ENCODE measurements at regions of chr6 and their contacts with region 1.

Region 1: DNA sequence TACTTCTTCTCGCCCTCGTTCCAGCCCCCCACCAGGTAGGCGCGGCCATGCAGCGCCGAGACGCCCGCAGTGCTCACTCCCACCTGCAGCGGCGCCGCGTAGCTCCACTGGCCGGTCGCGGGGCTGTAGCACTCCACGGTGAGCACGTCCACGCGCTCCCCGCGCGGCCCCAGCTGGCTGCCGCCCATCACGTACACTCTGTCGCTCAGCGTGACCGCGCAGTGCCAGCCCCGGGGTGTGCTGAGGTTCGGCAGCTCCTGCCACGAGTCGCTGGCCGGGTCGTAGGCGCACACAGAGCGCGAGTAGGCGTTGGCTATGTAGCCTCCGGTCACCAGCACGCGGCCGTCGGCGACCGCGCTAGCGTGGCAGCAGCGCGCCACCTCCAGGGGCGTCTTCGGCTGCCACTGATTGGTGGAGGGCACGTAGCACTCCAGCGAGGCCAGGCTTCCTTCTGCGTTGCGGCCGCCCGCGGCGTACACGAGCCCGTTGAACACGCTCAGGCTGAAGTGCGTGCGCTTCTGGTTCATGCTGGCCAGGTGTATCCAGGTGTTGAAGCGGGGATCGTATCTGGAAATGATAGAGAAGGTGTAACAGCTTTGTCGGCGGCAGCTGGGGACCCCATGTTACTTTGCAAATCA is 13.7 kb downstream of the KLHL31 start:
- DNase-seq: peak; percentile 62 to 82 (median 74)
- ATAC-seq: peak; percentile 94
- H3K4me3 ChIP-seq: peak overlapping the region; percentile 91
- H3K4me3 Mint-ChIP-seq: peak overlapping the region; percentile 90 to 99 (median 94)
- H3K27ac ChIP-seq: peak overlapping the region; percentile 45
- H3K27ac Mint-ChIP-seq: peak overlapping the region; percentile 65 to 93 (median 84)
- H3K4me1 ChIP-seq: peaks cover 9 to 15% of the 10 kb centered on the region in 2 donors
- H3K4me1 Mint-ChIP-seq: peaks cover 14 to 34% (median 21%) of the 10 kb centered on the region in 7 donors
- H3K27me3 ChIP-seq: no peaks in the 10 kb centered on the region
- H3K27me3 Mint-ChIP-seq: peaks cover 0 to 35% (median 0%) of the 10 kb centered on the region in 5 donors

Region 2: DNA sequence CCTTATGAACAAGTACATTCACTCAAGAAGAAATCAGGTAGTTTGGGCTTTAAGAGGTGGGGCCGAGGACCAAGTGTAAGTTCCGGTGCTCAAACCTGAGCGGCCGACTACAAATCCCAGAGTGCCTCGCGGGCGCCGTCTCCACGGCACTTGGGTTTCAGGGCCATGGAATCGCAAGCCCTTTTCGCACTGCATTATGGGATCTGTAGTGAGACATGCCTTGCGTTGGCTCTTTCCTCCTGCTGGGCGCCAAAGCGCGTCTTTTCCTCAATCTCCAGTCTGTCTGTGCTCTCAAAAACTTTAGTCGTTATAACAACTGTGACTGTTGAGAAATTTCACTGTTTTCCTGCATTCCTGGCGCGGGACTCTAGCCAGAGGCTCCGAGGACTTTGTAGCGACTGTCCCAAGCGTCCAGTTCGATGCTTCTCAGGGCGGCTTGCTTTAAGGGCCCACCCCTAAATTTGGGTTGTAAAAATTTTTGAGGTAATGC is 587.1 kb before region 1 on chr6:
- CTCF ChIA-PET with region 1: no interaction called
- POLR2A ChIA-PET with region 1: no interaction called
- intact Hi-C with region 1: loop called in 1 of 2 experiments (anchors 1 kb)
- DNase-seq: peak; percentile 81 to 98 (median 94)
- ATAC-seq: peak; percentile 91
- H3K4me3 ChIP-seq: peak overlapping the region; percentile 95
- H3K4me3 Mint-ChIP-seq: peak overlapping the region; percentile 86 to 100 (median 99)
- H3K27ac ChIP-seq: peak overlapping the region; percentile 78
- H3K27ac Mint-ChIP-seq: peak overlapping the region; percentile 90 to 99 (median 97)
- H3K4me1 ChIP-seq: peaks cover 22% of the 10 kb centered on the region in 2 donors
- H3K4me1 Mint-ChIP-seq: peaks cover 36 to 68% (median 56%) of the 10 kb centered on the region in 7 donors
- H3K27me3 ChIP-seq: no peaks in the 10 kb centered on the region
- H3K27me3 Mint-ChIP-seq: no peaks in the 10 kb centered on the region

Region 3: DNA sequence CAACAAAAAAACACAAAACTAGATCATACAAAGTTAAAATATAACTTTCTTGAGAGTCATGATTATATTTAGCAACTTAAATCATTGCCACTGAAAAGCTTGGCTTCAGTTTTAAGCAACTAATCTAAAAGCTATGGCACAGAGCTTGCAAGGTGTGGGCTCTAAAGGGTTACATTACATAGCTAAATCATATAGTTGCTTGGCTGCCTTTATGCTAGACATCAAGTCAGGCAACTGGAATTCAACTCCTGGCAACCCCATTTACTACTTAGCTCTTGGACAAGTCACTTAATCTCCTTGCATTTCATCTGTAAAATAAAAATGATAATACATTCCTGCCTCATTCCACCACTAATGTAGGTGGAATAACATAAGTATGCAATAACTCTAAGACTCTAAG is 462.3 kb before region 1 on chr6:
- CTCF ChIA-PET with region 1: no interaction called
- POLR2A ChIA-PET with region 1: no interaction called
- intact Hi-C with region 1: loop called (anchors 5 kb)
- DNase-seq: no peak
- ATAC-seq: no peak
- H3K4me3 ChIP-seq: no peak overlapping the region
- H3K4me3 Mint-ChIP-seq: no peak overlapping the region
- H3K27ac ChIP-seq: no peak overlapping the region
- H3K27ac Mint-ChIP-seq: no peak overlapping the region
- H3K4me1 ChIP-seq: peaks cover 12 to 26% of the 10 kb centered on the region in 2 donors
- H3K4me1 Mint-ChIP-seq: peaks cover 8 to 39% (median 29%) of the 10 kb centered on the region in 7 donors
- H3K27me3 ChIP-seq: no peaks in the 10 kb centered on the region
- H3K27me3 Mint-ChIP-seq: peaks cover 0 to 2% (median 0%) of the 10 kb centered on the region in 5 donors

Region 4: DNA sequence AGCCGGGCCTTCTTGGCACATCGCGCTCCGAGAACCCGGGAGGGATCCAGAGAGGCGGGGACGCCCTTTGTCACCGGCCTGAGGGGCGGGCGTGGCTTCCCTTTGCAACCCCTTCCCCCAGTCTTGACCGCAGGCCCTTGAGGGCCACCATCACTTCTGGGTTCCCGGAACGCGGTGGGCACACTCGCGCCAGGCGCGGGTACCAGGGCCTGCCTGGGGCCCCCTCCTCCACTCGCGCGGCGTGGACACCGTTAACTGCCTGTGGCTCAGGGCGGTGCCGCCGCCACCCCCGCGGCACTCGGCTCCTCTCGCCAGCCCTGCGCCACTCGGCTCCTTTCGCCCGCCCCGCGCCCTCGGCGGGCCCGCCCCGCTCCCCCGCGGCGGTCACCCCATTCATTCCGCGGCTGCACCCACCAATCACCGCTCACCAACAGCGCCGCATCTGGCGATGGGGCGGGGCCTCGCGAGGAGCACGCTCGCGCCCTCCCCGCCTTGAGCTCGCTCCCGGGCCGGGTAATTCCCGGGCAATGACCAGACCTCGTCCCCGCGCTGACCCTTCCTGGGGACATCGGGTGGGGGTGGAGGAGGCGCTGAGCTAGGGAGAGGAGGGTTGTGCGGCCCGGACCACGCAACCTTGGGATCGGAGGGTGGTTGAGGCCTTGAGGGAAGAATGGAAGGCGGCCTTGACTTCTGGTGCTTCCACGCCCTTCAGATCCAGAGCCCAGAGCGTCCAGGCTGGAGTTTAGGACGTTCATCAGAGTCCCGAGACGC is 292.6 kb before region 1 on chr6:
- CTCF ChIA-PET with region 1: no interaction called
- POLR2A ChIA-PET with region 1: interaction called, 3 read pairs
- intact Hi-C with region 1: loop called in 1 of 2 experiments (anchors 5 kb)
- DNase-seq: peak; percentile 79 to 96 (median 89)
- ATAC-seq: peak; percentile 91
- H3K4me3 ChIP-seq: peak overlapping the region; percentile 76
- H3K4me3 Mint-ChIP-seq: peak overlapping the region; percentile 78 to 94 (median 90)
- H3K27ac ChIP-seq: peak overlapping the region; percentile 88
- H3K27ac Mint-ChIP-seq: peak overlapping the region; percentile 87 to 99 (median 98)
- H3K4me1 ChIP-seq: peaks cover 33 to 41% of the 10 kb centered on the region in 2 donors
- H3K4me1 Mint-ChIP-seq: peaks cover 24 to 54% (median 43%) of the 10 kb centered on the region in 7 donors
- H3K27me3 ChIP-seq: no peaks in the 10 kb centered on the region
- H3K27me3 Mint-ChIP-seq: peaks cover 0 to 4% (median 0%) of the 10 kb centered on the region in 5 donors

Region 5: GRCh38 chr6:53492860-53493634 is 158.8 kb before region 1 on chr6:
- CTCF ChIA-PET with region 1: interaction called, 80 read pairs
- POLR2A ChIA-PET with region 1: interaction called, 7 read pairs
- intact Hi-C with region 1: loop called (anchors 1 kb)
- DNase-seq: peak in 7 of 9 donors; percentile 22 to 65 (median 49)
- ATAC-seq: peak; percentile 66
- H3K4me3 ChIP-seq: no peak overlapping the region
- H3K4me3 Mint-ChIP-seq: no peak overlapping the region
- H3K27ac ChIP-seq: no peak overlapping the region
- H3K27ac Mint-ChIP-seq: peak overlapping the region in 1 of 9 donors; percentile 18
- H3K4me1 ChIP-seq: no peaks in the 10 kb centered on the region
- H3K4me1 Mint-ChIP-seq: peaks cover 0 to 7% (median 4%) of the 10 kb centered on the region in 7 donors
- H3K27me3 ChIP-seq: no peaks in the 10 kb centered on the region
- H3K27me3 Mint-ChIP-seq: peaks cover 0 to 34% (median 17%) of the 10 kb centered on the region in 5 donors

Region 6: DNA sequence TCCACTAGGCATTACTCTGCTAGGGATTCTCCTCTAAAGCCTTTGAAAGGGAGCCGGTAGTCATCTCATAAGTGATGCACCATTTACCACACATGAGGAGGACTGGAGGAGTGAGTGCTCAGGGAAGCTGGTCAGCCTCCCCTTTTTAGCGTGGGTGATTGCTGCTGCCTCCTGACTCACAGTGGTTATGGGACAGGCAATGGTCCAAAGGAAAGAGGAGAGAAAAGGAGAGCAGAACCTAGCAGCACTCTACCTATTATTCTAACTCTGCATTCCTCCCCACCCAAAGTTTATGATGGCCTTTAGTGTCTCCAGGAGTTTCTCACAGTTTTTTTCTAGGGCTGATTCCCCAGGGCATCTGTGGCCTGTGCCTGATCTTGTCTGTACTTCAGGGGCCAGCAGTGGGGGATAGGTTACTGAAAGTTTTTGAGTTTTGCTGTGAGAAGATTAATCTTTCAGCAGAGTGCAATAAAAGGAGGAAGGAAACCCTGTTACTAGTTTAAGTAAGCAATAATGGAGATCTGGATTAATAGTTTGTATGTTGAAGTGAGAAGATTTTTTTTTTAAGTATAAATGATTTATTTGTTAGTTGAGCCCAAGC is 70.6 kb before region 1 on chr6:
- CTCF ChIA-PET with region 1: no interaction called
- POLR2A ChIA-PET with region 1: no interaction called
- intact Hi-C with region 1: no loop called
- DNase-seq: no peak
- ATAC-seq: no peak
- H3K4me3 ChIP-seq: no peak overlapping the region
- H3K4me3 Mint-ChIP-seq: no peak overlapping the region
- H3K27ac ChIP-seq: no peak overlapping the region
- H3K27ac Mint-ChIP-seq: peak overlapping the region in 1 of 9 donors; percentile 10
- H3K4me1 ChIP-seq: no peaks in the 10 kb centered on the region
- H3K4me1 Mint-ChIP-seq: peaks cover 0 to 8% (median 0%) of the 10 kb centered on the region in 7 donors
- H3K27me3 ChIP-seq: no peaks in the 10 kb centered on the region
- H3K27me3 Mint-ChIP-seq: no peaks in the 10 kb centered on the region

Region 7: DNA sequence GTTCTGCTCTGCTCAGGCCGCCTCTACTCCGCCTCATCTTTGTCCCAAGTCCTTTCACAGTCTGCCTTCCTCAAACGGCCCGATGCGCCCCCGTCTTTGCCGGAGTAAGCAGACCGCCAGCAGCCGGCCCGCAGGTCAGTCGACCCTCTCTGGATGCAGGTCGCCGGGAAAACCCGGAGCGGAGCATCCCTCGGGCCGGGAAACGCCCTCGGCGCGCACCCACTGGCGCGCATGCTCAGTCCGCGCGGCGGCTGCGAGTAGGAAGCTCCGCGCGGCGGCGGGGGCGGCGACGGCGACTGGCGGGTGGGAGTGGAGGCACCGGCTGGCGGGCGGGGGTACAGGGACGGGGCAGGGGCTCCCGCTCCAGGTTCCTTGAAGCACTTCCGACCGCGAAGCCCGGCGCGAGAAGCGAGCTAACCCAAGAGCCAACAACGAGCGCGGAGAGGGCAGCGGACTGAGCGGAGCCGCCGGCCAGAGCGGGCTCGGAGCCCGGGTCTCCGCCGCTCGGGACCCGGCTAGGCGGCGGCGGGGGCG is 142.9 kb after region 1 on chr6 and contains the start of gene LRRC1:
- CTCF ChIA-PET with region 1: no interaction called
- POLR2A ChIA-PET with region 1: no interaction called
- intact Hi-C with region 1: loop called (anchors 1 kb)
- DNase-seq: peak; percentile 61 to 94 (median 76)
- ATAC-seq: peak; percentile 78
- H3K4me3 ChIP-seq: peak within 1 kb of the TSS; percentile 96
- H3K4me3 Mint-ChIP-seq: peak within 1 kb of the TSS; percentile 93 to 98 (median 96)
- H3K27ac ChIP-seq: peak within 1 kb of the TSS; percentile 43
- H3K27ac Mint-ChIP-seq: peak within 1 kb of the TSS in 8 of 9 donors; percentile 75 to 91 (median 86)
- H3K4me1 ChIP-seq: peaks cover 7 to 13% of the 10 kb centered on the region in 2 donors
- H3K4me1 Mint-ChIP-seq: peaks cover 21 to 33% (median 28%) of the 10 kb centered on the region in 7 donors
- H3K27me3 ChIP-seq: peaks cover 0 to 8% of the 10 kb centered on the region in 2 donors
- H3K27me3 Mint-ChIP-seq: peaks cover 7 to 55% (median 18%) of the 10 kb centered on the region in 5 donors
- total RNA-seq, gene LRRC1: 1.2 to 3.6 (median 3.4) TPM